Activated T-helper 2 cell treated with anti-CD3 and anti-CD28 coated beads, Interferon-gamma antibody, Interleukin-2, Interleukin-4, amounts not matched to agents 10 μg/mL and 5 μg/mL and 100 μg/mL, durations not matched to agents 14 hours and 24 hours and 36 hours (primary cell): ENCODE measurements at regions of chr5 and their contacts with region 1.

Region 1: GRCh38 chr5:132662925-132663770 is 5.2 kb downstream of the IL13 start:
- DNase-seq: no peak
- H3K4me3 Mint-ChIP-seq: no peak overlapping the region
- H3K27ac Mint-ChIP-seq: peak overlapping the region; percentile 92
- H3K4me1 Mint-ChIP-seq: peaks cover 74% of the 10 kb centered on the region
- H3K27me3 Mint-ChIP-seq: no peaks in the 10 kb centered on the region

Region 2: DNA sequence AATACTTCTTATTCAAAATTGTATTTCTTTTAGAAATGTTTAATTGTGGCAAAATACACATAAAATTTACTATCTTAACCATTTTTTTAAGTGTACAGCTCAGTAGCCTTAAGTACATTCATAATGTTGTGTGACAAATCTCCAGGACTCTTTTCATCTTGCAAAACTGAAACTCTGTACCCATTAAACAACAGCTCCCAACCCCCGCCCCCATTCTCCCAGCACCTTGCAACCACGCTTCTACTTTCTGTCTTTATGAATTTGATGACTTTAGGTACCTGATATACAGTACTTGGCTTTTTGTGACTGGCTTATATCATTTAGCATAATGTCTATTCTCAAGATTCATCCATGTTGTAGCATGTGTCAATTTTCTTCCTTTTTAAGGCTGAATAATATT is 117.0 kb before region 1 on chr5:
- intact Hi-C with region 1: loop called (anchors 5 kb)
- DNase-seq: no peak
- H3K4me3 Mint-ChIP-seq: no peak overlapping the region
- H3K27ac Mint-ChIP-seq: peak overlapping the region; percentile 41
- H3K4me1 Mint-ChIP-seq: peaks cover 61% of the 10 kb centered on the region
- H3K27me3 Mint-ChIP-seq: peaks cover 6% of the 10 kb centered on the region

Region 3: DNA sequence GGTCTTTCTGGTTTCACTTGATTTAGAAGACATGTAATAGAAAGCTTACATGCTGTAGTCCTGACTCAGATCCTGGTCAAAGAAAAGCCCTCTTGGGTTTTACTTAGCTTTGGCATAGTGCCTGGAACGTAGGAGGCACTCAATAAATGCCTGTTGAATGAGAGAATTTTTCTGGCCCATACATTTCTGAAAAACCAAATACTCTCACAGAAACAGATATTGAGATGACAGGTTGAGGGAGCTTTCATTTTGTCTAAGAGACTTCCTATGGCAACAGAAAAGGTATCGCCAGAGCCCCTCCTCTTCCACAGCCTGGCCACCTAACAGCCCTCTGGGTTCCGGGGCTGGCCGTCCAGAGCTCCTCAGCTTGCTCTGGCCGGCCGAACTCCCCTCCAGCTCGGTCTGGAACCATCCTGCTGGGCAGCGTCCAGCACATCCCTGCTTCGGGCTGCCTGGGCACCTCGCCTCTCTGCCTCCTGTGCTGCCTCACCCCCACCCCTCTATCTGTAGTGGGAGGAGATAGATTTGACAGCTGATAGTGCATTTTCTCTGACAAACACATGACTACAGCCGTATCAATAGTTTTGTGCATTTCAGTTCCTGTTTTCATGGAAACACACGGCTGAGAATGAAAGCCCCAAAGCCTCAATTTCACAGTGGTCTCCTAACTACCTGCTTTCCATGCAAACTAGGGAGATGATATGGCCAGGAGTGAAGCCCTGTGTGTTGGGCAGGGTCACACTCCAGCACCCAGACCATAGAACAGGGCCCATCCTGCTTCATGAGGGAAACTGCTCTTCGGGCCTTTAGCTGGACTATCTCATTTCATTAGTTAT is 11.7 kb after region 1 on chr5:
- intact Hi-C with region 1: loop called (anchors 1 kb)
- DNase-seq: no peak
- H3K4me3 Mint-ChIP-seq: peak overlapping the region; percentile 70
- H3K27ac Mint-ChIP-seq: peak overlapping the region; percentile 95
- H3K4me1 Mint-ChIP-seq: peaks cover 40% of the 10 kb centered on the region
- H3K27me3 Mint-ChIP-seq: no peaks in the 10 kb centered on the region

Region 4: GRCh38 chr5:132688536-132689339 is 25.6 kb after region 1 on chr5:
- intact Hi-C with region 1: loop called (anchors 1 kb)
- DNase-seq: no peak
- H3K4me3 Mint-ChIP-seq: no peak overlapping the region
- H3K27ac Mint-ChIP-seq: peak overlapping the region; percentile 68
- H3K4me1 Mint-ChIP-seq: peaks cover 45% of the 10 kb centered on the region
- H3K27me3 Mint-ChIP-seq: peaks cover 1% of the 10 kb centered on the region

Region 5: GRCh38 chr5:132753135-132753987 is 90.2 kb after region 1 on chr5:
- intact Hi-C with region 1: loop called (anchors 5 kb)
- DNase-seq: no peak
- H3K4me3 Mint-ChIP-seq: no peak overlapping the region
- H3K27ac Mint-ChIP-seq: peak overlapping the region; percentile 5
- H3K4me1 Mint-ChIP-seq: peaks cover 42% of the 10 kb centered on the region
- H3K27me3 Mint-ChIP-seq: peaks cover 4% of the 10 kb centered on the region